Thyroid gland (tissue), 4 donors: ENCODE measurements at regions of chr17 and their contacts with region 1.

Region 1: GRCh38 chr17:64491034-64491859 is 5.6 kb downstream of the POLG2 start:
- DNase-seq: peak in 1 of 2 donors; percentile 22
- H3K4me3 ChIP-seq: no peak overlapping the region
- H3K27ac ChIP-seq: no peak overlapping the region
- H3K4me1 ChIP-seq: peaks cover 9 to 16% of the 10 kb centered on the region in 2 donors
- H3K27me3 ChIP-seq: no peaks in the 10 kb centered on the region
- CTCF ChIP-seq: peak in 3 of 6 experiments; percentile 22 to 42 (median 39)
- POLR2A ChIP-seq: no peak

Region 2: DNA sequence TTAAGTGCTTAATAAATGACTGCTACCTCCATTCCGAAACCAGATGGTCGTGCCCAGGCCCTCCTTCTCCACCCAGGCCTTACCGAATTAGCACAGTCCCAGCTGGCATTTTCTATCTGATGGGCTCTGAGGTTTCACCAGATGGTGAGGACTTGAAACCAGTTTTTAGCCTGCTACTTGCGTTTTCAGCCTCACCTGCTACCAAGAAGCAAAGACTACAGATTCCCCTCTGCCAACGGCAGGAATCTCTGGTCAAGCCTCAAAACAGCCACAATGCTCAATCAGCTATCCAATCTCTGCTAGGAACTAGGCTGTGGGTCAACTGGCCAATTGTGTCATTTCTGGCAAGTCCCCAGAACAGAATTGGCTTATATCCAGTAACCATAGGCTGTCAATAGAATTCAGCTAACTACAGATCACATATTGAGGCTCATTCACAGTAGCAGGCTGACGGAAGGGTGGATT is 112.3 kb before region 1 on chr17:
- intact Hi-C with region 1: no loop called
- DNase-seq: no peak
- H3K4me3 ChIP-seq: no peak overlapping the region
- H3K27ac ChIP-seq: peak overlapping the region in 2 of 3 donors; percentile 6 to 21
- H3K4me1 ChIP-seq: peaks cover 0 to 18% of the 10 kb centered on the region in 2 donors
- H3K27me3 ChIP-seq: no peaks in the 10 kb centered on the region
- CTCF ChIP-seq: no peak
- POLR2A ChIP-seq: no peak

Region 3: DNA sequence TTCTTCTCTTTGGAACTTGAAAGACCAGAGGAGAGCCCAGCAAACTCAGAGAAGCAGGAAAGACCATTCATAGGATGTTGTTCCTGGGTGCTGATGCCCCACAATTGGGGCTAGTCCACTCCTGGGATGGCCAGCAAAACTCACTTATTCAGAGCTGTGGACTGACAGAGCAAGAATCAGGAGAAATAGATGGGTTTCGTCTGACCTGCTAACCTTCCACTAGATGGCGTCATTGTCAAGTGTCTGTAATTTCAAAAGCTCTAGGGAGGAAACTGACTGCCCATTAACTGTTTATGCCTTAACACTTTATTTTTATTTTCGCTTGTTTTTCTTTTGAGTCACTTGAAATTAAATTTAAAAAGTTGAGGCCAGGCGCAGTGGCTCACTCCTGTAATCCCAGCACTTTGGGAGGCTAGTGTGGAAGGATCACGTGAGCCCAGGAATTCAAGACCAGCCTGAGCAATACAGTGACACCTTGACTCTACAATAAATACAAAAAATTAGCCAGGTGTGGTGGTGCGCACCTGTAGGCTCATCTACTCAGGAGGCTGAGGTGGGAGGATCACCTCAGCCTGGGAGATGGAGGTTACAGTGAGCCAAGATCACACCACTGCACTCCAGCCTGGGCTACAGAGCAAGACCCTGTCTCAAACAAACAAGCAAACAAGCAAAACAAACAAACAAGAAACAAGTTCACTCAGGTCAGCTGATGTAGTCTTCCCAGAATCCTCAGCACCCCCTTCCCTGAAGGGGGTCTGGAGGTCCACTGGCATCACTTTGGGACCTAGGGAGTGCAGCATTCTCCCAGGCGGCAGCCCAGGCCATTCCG is 70.9 kb before region 1 on chr17:
- intact Hi-C with region 1: loop called (anchors 5 kb)
- DNase-seq: no peak
- H3K4me3 ChIP-seq: no peak overlapping the region
- H3K27ac ChIP-seq: no peak overlapping the region
- H3K4me1 ChIP-seq: no peaks in the 10 kb centered on the region
- H3K27me3 ChIP-seq: no peaks in the 10 kb centered on the region
- CTCF ChIP-seq: peak; percentile 49 to 84 (median 76)
- POLR2A ChIP-seq: no peak